PC-9 (cell line): ENCODE measurements at regions of chr3 and their contacts with region 1.

Region 1: DNA sequence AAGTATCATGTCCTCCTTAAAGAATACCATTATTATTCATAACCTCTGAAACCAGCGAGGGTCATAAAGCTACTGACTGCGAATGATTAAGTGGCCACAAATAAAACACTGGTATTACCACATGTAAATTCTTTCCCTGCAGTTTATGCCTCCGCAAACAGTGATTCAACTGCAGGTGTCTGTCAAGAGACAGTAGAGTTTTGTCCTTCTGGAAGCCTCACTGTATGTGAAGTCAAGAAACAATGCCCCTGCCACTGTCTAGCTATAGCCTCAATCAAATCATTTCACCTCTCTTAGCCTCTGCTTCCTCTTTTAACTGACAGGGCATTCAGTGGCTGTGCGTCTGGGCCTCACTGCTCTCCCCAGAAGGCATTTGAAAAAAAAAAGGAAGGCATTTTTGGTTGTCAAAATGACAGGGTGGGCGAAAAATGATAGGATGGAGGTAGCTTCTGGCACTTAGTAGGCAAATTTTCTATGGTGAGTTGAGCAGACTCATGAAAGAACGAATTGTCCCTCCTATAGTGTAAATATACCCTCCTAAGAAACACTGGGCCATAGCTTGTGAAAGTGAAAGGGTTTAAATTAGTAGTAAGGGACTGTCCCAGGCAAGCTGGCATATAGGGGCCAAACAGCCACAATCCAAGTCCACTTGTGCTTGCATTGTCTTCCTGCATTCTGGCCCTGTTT is 66.7 kb downstream of the FILIP1L start:
- DNase-seq: peak; percentile 41 to 99
- H3K4me3 ChIP-seq: peak overlapping the region; percentile 3; the same call in 1 of the 2 replicates
- H3K27ac ChIP-seq: peak overlapping the region; percentile 76
- H3K4me1 ChIP-seq: peaks cover 67% of the 10 kb centered on the region
- H3K27me3 ChIP-seq: no peaks in the 10 kb centered on the region
- CTCF ChIP-seq: no peak

Region 2: DNA sequence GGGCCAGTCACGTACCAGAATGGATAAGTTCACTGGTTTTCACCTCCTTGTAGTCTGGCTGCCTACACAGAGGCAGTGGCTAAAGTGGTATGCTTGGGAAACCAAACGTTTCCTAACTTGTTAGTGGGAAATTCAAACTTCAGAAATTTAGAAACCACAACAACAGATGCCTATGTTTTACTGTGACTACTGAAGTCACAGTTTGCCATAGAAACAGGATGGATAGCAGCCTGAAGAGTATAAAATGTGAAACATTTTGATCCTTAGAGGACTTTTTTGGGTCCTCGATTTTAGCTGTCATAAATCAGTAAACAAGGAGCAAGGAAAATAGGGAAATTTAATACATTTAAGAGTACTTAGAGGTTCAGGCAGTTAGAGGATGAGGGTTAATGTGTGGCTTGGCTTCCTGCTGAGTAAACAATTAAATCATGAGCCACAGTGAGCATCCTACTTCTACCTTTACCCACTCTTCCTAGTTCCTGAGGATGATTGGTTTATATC is 181.3 kb before region 1 on chr3:
- CTCF ChIA-PET with region 1: no interaction called
- POLR2A ChIA-PET with region 1: no interaction called
- intact Hi-C with region 1: loop called (anchors 5 kb)
- DNase-seq: no peak
- H3K4me3 ChIP-seq: no peak overlapping the region
- H3K27ac ChIP-seq: no peak overlapping the region
- H3K4me1 ChIP-seq: peaks cover 26% of the 10 kb centered on the region
- H3K27me3 ChIP-seq: no peaks in the 10 kb centered on the region
- CTCF ChIP-seq: no peak

Region 3: DNA sequence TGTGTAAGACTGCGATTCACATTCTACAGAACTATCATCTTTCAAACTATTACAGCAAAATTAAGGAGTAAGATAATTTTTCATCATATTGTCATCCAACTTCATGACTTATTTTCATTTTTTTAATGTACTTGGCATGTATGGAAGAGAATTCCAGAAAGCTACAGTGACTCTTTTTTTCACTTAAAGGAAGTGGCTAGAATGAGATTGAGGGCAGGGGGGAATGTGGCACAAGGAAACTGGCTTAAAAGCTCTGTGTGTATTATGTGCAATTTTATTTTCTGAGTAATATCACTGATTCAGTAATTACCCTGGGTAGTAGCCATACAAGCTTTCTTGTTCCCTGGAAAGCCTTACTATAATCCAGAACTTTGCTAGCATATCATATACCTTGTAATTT is 27.9 kb before region 1 on chr3:
- CTCF ChIA-PET with region 1: no interaction called
- POLR2A ChIA-PET with region 1: no interaction called
- intact Hi-C with region 1: no loop called
- DNase-seq: no peak
- H3K4me3 ChIP-seq: no peak overlapping the region
- H3K27ac ChIP-seq: no peak overlapping the region
- H3K4me1 ChIP-seq: no peaks in the 10 kb centered on the region
- H3K27me3 ChIP-seq: no peaks in the 10 kb centered on the region
- CTCF ChIP-seq: no peak

Region 4: DNA sequence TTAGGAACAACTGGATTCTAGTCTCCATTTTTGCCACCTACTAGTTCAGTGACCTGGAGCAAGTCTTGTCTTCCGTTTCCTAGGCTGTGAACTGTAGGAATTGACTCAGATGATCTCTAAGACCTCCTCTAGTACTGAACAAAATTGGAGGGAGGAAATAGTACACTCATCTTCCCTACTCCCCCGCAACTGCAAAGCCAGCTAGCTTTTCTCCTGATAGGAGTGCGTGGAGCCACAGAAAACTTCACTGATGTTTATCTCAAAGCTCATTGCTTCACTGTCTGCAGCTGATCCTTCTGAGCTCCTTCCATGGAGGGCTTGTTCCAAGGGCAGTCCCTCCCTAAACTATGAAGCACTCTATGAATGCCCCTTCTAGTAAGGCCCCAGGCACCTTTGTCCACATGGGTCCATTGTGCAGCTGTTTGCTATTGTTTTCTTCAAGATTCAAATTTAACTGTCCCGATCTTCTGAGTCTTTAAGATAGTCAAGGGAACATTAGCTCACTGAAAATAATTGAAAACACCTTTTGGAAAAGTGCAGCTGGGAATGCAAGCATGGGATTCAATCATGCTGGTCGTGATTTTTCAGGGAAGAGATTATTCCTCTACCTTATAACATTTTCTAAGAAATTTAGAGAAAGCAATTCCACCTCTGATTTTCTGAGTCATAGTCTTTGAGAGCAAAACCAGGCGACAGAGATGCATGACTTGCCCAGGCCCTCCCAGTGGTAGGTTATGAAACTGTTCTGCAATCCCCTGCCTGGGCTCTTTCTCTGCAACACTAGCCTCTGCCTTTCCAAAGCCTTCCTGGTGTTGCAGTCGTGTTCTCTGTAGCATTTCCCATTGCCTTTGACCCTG is 42.4 kb after region 1 on chr3:
- CTCF ChIA-PET with region 1: interaction called, 16 read pairs
- POLR2A ChIA-PET with region 1: no interaction called
- intact Hi-C with region 1: no loop called
- DNase-seq: peak in 1 of 2 experiments; percentile 63
- H3K4me3 ChIP-seq: no peak overlapping the region
- H3K27ac ChIP-seq: no peak overlapping the region
- H3K4me1 ChIP-seq: peaks cover 10% of the 10 kb centered on the region
- H3K27me3 ChIP-seq: no peaks in the 10 kb centered on the region
- CTCF ChIP-seq: peak; percentile 69

Region 5: GRCh38 chr3:100097919-100098783 is 50.6 kb after region 1 on chr3:
- CTCF ChIA-PET with region 1: interaction called, 16 read pairs
- POLR2A ChIA-PET with region 1: no interaction called
- intact Hi-C with region 1: loop called (anchors 2 kb)
- DNase-seq: peak; percentile 49 to 96
- H3K4me3 ChIP-seq: peak overlapping the region; percentile 6; the same call in 1 of the 2 replicates
- H3K27ac ChIP-seq: peak overlapping the region; percentile 40
- H3K4me1 ChIP-seq: peaks cover 46% of the 10 kb centered on the region
- H3K27me3 ChIP-seq: no peaks in the 10 kb centered on the region
- CTCF ChIP-seq: no peak

Region 6: DNA sequence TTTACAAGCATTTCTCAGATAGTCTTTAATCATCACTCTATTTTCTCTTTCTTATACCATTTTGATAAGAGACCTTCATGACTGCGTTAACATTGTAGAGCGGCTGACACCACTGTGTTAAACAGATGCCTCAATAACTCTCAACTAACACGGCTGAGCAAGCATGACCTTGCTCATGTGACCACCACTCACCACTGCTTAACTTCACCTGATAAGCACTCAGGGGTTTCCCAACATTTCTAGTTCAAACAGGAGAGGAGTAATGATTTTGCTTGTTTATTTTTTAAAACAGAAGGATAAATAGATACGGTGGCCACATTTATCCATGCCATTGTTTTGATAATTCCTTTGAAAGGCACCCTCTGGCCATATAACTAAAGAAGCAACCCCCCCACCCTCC is 407.1 kb after region 1 on chr3:
- CTCF ChIA-PET with region 1: no interaction called
- POLR2A ChIA-PET with region 1: no interaction called
- intact Hi-C with region 1: no loop called
- DNase-seq: no peak
- H3K4me3 ChIP-seq: no peak overlapping the region
- H3K27ac ChIP-seq: no peak overlapping the region
- H3K4me1 ChIP-seq: no peaks in the 10 kb centered on the region
- H3K27me3 ChIP-seq: no peaks in the 10 kb centered on the region
- CTCF ChIP-seq: no peak